Spleen (tissue), 13 donors: ENCODE measurements at regions of chr3 and their contacts with region 1.

Region 1: GRCh38 chr3:60972599-60972998 is 278.7 kb downstream of the FHIT start:
- DNase-seq: no peak
- H3K4me3 ChIP-seq: no peak overlapping the region
- H3K27ac ChIP-seq: no peak overlapping the region
- H3K4me1 ChIP-seq: no peaks in the 10 kb centered on the region
- H3K27me3 ChIP-seq: no peaks in the 10 kb centered on the region
- CTCF ChIP-seq: no peak
- POLR2A ChIP-seq: no peak

Region 2: DNA sequence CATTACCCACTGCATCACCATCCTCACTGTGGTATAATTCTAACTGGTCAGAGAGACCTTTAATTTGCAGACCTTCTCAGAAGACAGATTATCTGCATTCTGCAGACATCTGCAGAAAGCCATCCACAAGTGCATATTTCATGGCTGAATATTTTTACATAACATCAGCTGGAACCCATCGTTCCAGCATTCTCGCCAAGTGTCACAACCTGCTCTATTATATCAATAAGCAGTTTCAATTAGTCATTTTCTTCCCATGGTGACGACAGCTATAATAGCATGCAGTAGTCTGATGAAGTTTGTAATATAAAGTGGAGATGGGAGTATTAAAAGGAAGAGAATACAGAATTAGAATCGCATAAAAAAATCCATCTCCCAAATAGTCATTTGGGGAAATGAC is 56.1 kb before region 1 on chr3:
- intact Hi-C with region 1: loop called (anchors 1 kb)
- DNase-seq: no peak
- H3K4me3 ChIP-seq: no peak overlapping the region
- H3K27ac ChIP-seq: no peak overlapping the region
- H3K4me1 ChIP-seq: no peaks in the 10 kb centered on the region
- H3K27me3 ChIP-seq: no peaks in the 10 kb centered on the region
- CTCF ChIP-seq: no peak
- POLR2A ChIP-seq: no peak